ENCODE measurements at regions of chr12 and their contacts with region 1.

Region 1: DNA sequence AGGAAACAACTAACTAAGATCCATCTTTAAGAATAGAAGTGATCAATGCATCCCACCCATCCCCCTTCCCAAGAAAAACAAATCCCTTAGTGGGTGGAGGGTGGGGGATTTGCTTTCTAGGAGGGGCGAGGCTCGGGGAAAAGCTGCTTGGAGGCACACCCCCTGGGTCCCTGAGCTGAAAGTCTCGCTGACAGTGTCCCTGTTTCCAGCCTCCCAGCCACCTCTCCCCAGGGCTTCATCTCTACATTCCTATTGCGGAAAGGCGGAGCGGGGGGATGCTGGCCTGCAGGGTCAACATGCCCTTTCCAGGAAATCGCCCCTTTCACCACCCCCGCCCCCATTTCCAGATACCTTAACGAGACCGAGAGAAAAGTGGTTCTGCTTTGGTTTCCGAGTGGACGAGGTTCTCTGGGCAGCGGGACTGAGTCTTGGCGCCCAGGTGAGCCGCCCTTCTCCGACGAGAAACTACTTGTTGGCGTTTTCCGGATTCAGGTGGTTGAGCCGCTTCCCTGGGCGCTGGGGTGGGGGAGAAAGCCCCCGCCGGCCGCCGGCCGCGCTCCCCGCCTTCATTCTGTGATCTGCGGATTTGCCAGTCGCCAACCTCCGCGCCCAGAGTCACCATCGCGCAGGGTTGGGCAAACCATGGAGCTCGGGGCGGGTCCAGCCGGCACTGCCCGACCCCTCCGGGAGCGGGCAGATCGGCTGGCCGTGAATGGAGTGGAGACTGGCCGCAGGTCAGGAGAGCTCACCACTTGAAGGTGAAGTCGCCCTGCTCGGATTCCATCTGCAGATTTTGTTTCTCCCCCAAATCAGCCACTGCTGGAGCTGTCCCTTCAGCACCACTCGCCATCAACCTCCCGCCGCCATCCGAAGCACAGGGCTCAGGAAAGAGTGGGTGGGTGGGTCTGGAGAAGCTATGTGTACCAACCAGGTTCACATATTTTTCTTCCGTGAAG is 505 bp downstream of the KCNC2 start:
- DNase-seq: no peak
- ATAC-seq: peak in 1 of 8 donors; percentile 12
- H3K4me3 ChIP-seq: peak overlapping the region in 1 of 10 donors; percentile 19
- H3K27ac ChIP-seq: no peak overlapping the region
- H3K4me1 ChIP-seq: peaks cover 0 to 4% (median 0%) of the 10 kb centered on the region in 9 donors
- H3K27me3 ChIP-seq: peaks cover 8 to 70% (median 48%) of the 10 kb centered on the region in 7 donors
- CTCF ChIP-seq: no peak

Region 2: GRCh38 chr12:74608231-74608775 is 600.8 kb before region 1 on chr12:
- intact Hi-C with region 1: no loop called
- DNase-seq: no peak
- ATAC-seq: no peak
- H3K4me3 ChIP-seq: no peak overlapping the region
- H3K27ac ChIP-seq: no peak overlapping the region
- H3K4me1 ChIP-seq: no peaks in the 10 kb centered on the region
- H3K27me3 ChIP-seq: no peaks in the 10 kb centered on the region
- CTCF ChIP-seq: no peak

Region 3: GRCh38 chr12:75172611-75173010 is 36.5 kb before region 1 on chr12:
- intact Hi-C with region 1: loop called in 1 of 10 experiments (anchors 1 kb)
- DNase-seq: no peak
- ATAC-seq: no peak
- H3K4me3 ChIP-seq: no peak overlapping the region
- H3K27ac ChIP-seq: no peak overlapping the region
- H3K4me1 ChIP-seq: no peaks in the 10 kb centered on the region
- H3K27me3 ChIP-seq: no peaks in the 10 kb centered on the region
- CTCF ChIP-seq: no peak

Region 4: DNA sequence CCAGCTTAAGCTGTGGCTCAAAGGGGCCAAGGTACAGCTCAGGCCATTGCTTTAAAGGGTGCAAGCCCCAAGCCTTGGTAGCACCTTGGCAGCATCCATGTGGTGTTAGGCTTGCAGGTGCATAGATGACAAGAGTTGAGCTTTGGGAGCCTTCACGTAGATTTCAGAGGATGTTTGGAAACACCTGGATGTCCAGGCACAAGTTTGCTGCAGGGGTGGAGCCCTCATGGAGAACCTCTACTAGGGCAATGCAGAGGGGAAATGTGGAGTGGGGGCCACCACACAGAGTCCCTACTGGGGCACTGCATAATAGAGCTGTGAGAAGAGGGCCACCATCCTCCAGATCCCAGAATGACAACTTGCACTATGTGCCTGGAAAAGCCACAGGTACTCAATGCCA is 219.6 kb after region 1 on chr12:
- intact Hi-C with region 1: no loop called
- DNase-seq: no peak
- ATAC-seq: no peak
- H3K4me3 ChIP-seq: no peak overlapping the region
- H3K27ac ChIP-seq: no peak overlapping the region
- H3K4me1 ChIP-seq: no peaks in the 10 kb centered on the region
- H3K27me3 ChIP-seq: no peaks in the 10 kb centered on the region
- CTCF ChIP-seq: no peak